ENCODE measurements at regions of chr20 and their contacts with region 1.

Region 1: DNA sequence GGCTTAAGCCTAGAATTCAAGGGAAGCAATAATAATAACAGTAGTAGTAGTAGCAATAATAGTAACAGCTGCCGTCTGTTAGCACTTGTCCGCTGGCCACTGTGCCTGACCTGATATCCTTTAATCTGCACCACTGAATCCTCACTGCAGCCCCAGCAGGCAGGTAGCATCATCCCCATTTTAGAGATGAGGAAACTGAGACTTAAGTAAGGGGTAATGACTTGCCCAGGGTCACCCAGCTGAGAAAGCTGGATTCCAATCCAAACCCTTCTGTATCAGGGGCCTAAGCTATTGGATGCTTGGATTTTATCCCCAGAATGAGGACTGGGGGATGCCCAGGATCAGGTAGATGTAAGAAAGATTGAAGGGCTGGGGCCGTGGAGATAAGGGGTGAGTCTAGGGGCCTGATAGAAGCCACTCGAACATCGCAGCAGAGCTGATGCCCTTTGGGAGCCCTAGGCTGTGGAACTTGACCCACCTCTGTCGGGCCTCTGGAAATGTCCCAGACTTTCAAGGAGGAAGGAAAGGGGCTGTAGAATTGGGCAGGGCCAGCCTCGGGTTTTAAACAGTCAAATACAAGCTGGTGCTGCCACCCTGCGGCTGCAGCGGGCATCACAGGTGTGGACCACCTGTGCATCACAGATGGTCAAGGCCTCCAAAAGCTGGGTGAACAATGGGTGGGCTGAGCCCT is 102.1 kb upstream of the MYL9 start:
- DNase-seq: peak; percentile 43
- ATAC-seq: peak; percentile 91
- H3K4me3 ChIP-seq: no peak overlapping the region
- H3K27ac ChIP-seq: no peak overlapping the region
- H3K4me1 ChIP-seq: no peaks in the 10 kb centered on the region
- H3K27me3 ChIP-seq: peaks cover 40% of the 10 kb centered on the region
- CTCF ChIP-seq: peak; percentile 85
- POLR2A ChIP-seq: no peak
- RAD21 ChIP-seq: peak; percentile 89

Region 2: GRCh38 chr20:35821807-35822242 is 617.4 kb before region 1 on chr20:
- CTCF ChIA-PET with region 1: no interaction called
- POLR2A ChIA-PET with region 1: no interaction called
- dilution Hi-C with region 1: no loop called
- in situ Hi-C with region 1: no loop called
- intact Hi-C with region 1: no loop called
- DNase-seq: peak; percentile 79
- ATAC-seq: peak; percentile 80
- H3K4me3 ChIP-seq: no peak overlapping the region
- H3K27ac ChIP-seq: peak overlapping the region; percentile 58
- H3K4me1 ChIP-seq: peaks cover 17% of the 10 kb centered on the region
- H3K27me3 ChIP-seq: no peaks in the 10 kb centered on the region
- CTCF ChIP-seq: no peak
- POLR2A ChIP-seq: no peak
- RAD21 ChIP-seq: no peak

Region 3: GRCh38 chr20:36205026-36205425 is 234.2 kb before region 1 on chr20:
- CTCF ChIA-PET with region 1: interaction called, 9 read pairs
- POLR2A ChIA-PET with region 1: no interaction called
- dilution Hi-C with region 1: no loop called
- in situ Hi-C with region 1: loop called (anchors 5 kb)
- intact Hi-C with region 1: loop called (anchors 1 kb)
- DNase-seq: no peak
- ATAC-seq: no peak
- H3K4me3 ChIP-seq: no peak overlapping the region
- H3K27ac ChIP-seq: no peak overlapping the region
- H3K4me1 ChIP-seq: no peaks in the 10 kb centered on the region
- H3K27me3 ChIP-seq: no peaks in the 10 kb centered on the region
- CTCF ChIP-seq: no peak
- POLR2A ChIP-seq: no peak
- RAD21 ChIP-seq: no peak

Region 4: DNA sequence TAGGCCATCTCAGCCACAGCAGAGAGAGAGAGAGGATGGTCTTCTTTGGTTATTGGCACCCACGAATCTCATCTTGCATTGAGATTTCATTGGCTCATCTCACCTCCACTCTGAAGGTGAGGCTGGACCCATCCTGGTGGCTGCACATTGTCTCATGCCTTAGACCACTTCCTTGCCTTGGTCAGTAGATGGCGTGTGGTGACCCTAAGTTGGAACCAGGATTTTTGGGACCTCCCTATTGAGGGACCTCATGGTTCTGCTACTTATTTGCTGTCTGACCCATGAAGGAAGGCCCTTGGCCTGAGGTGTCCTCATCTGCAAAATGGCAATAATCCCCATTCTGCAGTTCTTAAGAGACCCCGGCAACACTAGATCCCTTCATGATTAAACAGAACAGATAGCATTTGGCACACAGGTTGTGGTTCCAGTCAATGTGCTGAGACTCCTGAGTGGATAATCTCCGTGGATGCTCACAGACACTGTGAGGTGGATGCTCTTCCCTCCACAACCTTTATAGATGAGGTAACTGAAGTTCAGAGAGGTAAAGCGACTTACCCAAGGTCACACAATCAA is 224.4 kb before region 1 on chr20:
- CTCF ChIA-PET with region 1: interaction called, 3 read pairs
- POLR2A ChIA-PET with region 1: no interaction called
- dilution Hi-C with region 1: no loop called
- in situ Hi-C with region 1: loop called (anchors 5 kb)
- intact Hi-C with region 1: loop called (anchors 1 kb)
- DNase-seq: peak; percentile 33
- ATAC-seq: peak; percentile 81
- H3K4me3 ChIP-seq: no peak overlapping the region
- H3K27ac ChIP-seq: no peak overlapping the region
- H3K4me1 ChIP-seq: no peaks in the 10 kb centered on the region
- H3K27me3 ChIP-seq: no peaks in the 10 kb centered on the region
- CTCF ChIP-seq: peak; percentile 56
- POLR2A ChIP-seq: no peak
- RAD21 ChIP-seq: peak; percentile 58

Region 5: GRCh38 chr20:36273414-36274180 is 165.6 kb before region 1 on chr20:
- CTCF ChIA-PET with region 1: interaction called, 4 read pairs
- POLR2A ChIA-PET with region 1: no interaction called
- dilution Hi-C with region 1: no loop called
- in situ Hi-C with region 1: no loop called
- intact Hi-C with region 1: loop called (anchors 1 kb)
- DNase-seq: peak; percentile 16
- ATAC-seq: peak; percentile 42; the same call in 1 of the 2 replicates
- H3K4me3 ChIP-seq: no peak overlapping the region
- H3K27ac ChIP-seq: no peak overlapping the region
- H3K4me1 ChIP-seq: no peaks in the 10 kb centered on the region
- H3K27me3 ChIP-seq: peaks cover 53% of the 10 kb centered on the region
- CTCF ChIP-seq: peak; percentile 35
- POLR2A ChIP-seq: no peak
- RAD21 ChIP-seq: peak; percentile 39; the same call in 1 of the 2 replicates

Measured in IMR-90 (cell line).